Activated CD4-positive, alpha-beta T cell treated with anti-CD3 and anti-CD28 coated beads for 36 hours (primary cell): ENCODE measurements at regions of chr10 and their contacts with region 1.

Region 1: DNA sequence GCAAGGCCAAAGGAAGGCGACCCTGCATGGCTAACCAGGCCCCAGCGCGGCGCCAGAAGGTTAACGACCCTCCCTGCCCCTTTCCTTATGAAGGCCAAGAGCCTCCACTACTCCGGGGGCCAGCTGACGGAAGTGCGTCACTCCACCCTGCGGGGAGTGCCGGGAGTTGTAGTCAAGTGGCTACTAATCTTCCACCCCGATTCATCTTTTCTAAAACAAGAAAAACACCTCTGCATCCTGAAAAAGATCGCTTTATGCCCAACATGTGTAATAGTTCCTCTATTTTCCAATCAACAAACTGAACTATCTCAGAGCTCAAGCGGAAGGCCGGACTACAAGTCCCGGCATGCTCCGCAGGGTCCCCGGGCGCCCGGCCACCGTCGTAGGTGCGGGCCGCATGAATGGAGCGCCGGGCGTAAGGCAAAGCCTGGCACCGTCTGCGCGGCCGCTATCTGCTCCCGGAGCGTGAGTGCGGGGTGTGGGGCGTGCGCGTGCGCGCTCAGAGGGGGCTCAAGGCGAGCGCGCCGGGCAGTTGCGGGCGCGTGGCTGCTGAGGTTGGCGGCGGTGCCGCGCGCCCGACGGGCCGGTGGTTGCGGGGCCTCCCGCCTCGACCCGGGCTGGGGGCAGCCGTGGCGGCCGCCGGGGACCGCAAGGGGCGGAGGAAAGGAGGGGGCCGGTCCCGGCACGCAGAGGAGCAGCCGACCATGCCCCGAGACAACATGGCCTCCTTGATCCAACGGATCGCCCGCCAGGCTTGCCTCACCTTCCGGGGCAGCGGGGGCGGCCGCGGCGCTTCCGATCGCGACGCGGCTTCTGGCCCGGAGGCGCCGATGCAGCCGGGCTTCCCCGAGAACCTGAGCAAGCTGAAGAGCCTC is at the start of gene ADO:
- DNase-seq: peak; percentile 88
- ATAC-seq: peak; percentile 90
- H3K4me3 Mint-ChIP-seq: peak within 1 kb of the TSS; percentile 83
- H3K27ac Mint-ChIP-seq: peak within 1 kb of the TSS; percentile 99
- H3K4me1 Mint-ChIP-seq: peaks cover 33% of the 10 kb centered on the region
- H3K27me3 Mint-ChIP-seq: no peaks in the 10 kb centered on the region
- total RNA-seq, gene ADO: 21.5 to 23.2 TPM

Region 2: GRCh38 chr10:62637249-62638061 is 167.1 kb before region 1 on chr10:
- CTCF ChIA-PET with region 1: interaction called, 4 read pairs
- POLR2A ChIA-PET with region 1: interaction called, 3 read pairs
- intact Hi-C with region 1: loop called in 1 of 2 experiments (anchors 1 kb)
- DNase-seq: peak; percentile 82
- ATAC-seq: peak; percentile 95
- H3K4me3 Mint-ChIP-seq: no peak overlapping the region
- H3K27ac Mint-ChIP-seq: no peak overlapping the region
- H3K4me1 Mint-ChIP-seq: peaks cover 21% of the 10 kb centered on the region
- H3K27me3 Mint-ChIP-seq: no peaks in the 10 kb centered on the region

Region 3: DNA sequence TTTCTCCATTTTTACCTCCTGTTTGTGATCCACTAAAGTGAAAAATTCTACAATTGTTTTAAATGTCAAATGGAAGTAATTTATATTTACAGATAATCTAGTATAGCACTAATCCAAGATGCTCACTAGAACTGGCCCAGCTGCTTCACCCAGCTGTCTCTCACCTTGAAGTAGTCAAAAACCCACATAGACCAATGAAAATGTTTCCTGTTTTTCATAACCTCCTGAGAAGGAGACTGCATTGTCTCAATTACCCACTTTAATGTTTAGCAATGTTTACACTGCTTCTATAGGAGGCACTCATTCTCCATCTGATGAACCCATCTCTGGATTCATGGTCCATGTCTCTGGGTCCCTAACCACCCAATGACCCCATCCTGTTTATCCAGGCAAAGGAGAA is 56.2 kb before region 1 on chr10:
- CTCF ChIA-PET with region 1: no interaction called
- POLR2A ChIA-PET with region 1: no interaction called
- intact Hi-C with region 1: loop called in 1 of 2 experiments (anchors 1 kb)
- DNase-seq: no peak
- ATAC-seq: no peak
- H3K4me3 Mint-ChIP-seq: no peak overlapping the region
- H3K27ac Mint-ChIP-seq: peak overlapping the region; percentile 82
- H3K4me1 Mint-ChIP-seq: peaks cover 27% of the 10 kb centered on the region
- H3K27me3 Mint-ChIP-seq: no peaks in the 10 kb centered on the region

Region 4: DNA sequence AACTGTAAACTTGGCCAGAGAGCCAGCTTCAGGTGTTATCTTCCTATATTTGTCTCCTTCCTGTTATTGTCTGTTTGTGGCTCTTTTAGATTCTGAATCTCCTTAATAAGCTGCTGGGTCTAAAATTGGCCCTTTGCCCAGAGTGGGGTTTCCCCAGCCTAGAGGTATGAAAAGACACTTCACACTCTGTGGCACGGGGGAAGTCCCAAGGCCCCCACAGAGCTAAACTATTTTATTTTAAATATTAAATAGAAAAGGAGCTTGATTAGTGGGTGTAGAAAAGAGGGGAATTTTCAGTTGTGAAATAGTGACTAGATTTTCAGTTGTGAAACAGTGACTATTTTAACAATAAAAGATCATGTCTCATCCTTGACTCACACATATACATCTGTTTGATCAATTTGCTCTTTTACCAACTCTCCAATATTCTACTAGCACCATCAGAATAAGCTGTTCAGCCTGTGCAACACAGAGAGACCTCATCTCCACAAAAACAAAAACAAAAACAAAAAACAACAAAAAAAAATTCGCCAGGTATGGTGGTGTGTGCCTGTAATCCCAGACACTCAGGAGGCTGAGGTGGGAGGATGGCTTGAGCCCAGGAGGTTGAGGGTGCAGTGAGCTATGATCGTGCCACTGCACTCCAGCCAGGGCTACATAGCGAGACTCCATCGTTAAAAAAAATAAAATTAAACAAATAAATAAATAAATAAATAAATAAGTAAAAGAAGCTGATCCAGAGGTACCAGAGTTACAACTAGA is 24.9 kb before region 1 on chr10:
- CTCF ChIA-PET with region 1: interaction called, 7 read pairs
- POLR2A ChIA-PET with region 1: interaction called, 5 read pairs
- intact Hi-C with region 1: loop called in 1 of 2 experiments (anchors 2 kb)
- DNase-seq: peak; percentile 92
- ATAC-seq: peak; percentile 91
- H3K4me3 Mint-ChIP-seq: no peak overlapping the region
- H3K27ac Mint-ChIP-seq: peak overlapping the region; percentile 80
- H3K4me1 Mint-ChIP-seq: peaks cover 34% of the 10 kb centered on the region
- H3K27me3 Mint-ChIP-seq: peaks cover 4% of the 10 kb centered on the region

Region 5: DNA sequence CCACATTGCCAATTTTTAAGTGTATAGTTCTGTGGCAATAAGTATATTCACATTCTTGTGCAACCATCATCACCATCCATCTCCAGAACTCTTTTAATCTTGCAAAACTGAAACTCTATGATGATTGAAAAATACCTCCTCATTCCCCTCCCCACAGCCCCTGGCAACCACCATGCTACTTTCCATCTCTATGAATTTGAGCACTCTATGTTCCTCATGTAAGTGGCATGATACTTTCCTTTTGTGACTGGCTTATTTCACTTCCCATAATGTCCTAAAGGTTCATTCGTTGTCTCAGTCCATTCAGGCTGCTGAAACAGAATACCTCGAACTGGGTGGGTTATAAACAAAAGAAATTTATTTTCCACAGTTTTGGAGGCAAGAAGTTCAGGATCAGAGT is 35.0 kb after region 1 on chr10:
- CTCF ChIA-PET with region 1: no interaction called
- POLR2A ChIA-PET with region 1: no interaction called
- intact Hi-C with region 1: no loop called
- DNase-seq: peak; percentile 47
- ATAC-seq: peak; percentile 53
- H3K4me3 Mint-ChIP-seq: no peak overlapping the region
- H3K27ac Mint-ChIP-seq: no peak overlapping the region
- H3K4me1 Mint-ChIP-seq: peaks cover 10% of the 10 kb centered on the region
- H3K27me3 Mint-ChIP-seq: peaks cover 13% of the 10 kb centered on the region

Region 6: DNA sequence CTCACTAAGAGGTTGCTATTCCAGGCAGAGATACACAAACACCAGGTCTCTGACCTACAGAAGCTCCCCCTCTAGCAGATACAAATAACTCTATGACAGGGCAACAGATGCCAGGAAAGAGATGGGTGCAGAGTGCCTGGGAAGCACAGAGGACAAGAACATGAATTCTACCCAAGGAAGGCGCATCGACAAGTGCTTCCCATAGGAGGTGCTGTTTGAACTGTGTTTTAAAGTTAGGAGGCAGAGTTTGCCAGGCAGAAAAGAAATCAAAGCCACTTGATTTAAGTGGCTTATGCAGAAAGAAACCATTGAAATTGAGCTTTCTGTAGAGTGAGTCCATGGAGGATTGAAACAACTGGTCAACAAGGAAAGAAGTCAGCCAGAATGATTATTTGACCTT is 46.8 kb after region 1 on chr10:
- CTCF ChIA-PET with region 1: no interaction called
- POLR2A ChIA-PET with region 1: no interaction called
- intact Hi-C with region 1: no loop called
- DNase-seq: peak; percentile 51
- ATAC-seq: no peak
- H3K4me3 Mint-ChIP-seq: no peak overlapping the region
- H3K27ac Mint-ChIP-seq: no peak overlapping the region
- H3K4me1 Mint-ChIP-seq: peaks cover 47% of the 10 kb centered on the region
- H3K27me3 Mint-ChIP-seq: peaks cover 20% of the 10 kb centered on the region

Region 7: GRCh38 chr10:63133056-63133820 is 328.6 kb after region 1 on chr10 and contains the start of gene NRBF2:
- CTCF ChIA-PET with region 1: no interaction called
- POLR2A ChIA-PET with region 1: no interaction called
- intact Hi-C with region 1: loop called (anchors 1 kb)
- DNase-seq: peak; percentile 99
- ATAC-seq: peak; percentile 90
- H3K4me3 Mint-ChIP-seq: peak within 1 kb of the TSS; percentile 81
- H3K27ac Mint-ChIP-seq: peak within 1 kb of the TSS; percentile 92
- H3K4me1 Mint-ChIP-seq: peaks cover 46% of the 10 kb centered on the region
- H3K27me3 Mint-ChIP-seq: no peaks in the 10 kb centered on the region
- total RNA-seq, gene NRBF2: 23.9 to 24.1 TPM